Cardiac septum (tissue), 1 donor: ENCODE measurements at regions of chr6 and their contacts with region 1.

Region 1: DNA sequence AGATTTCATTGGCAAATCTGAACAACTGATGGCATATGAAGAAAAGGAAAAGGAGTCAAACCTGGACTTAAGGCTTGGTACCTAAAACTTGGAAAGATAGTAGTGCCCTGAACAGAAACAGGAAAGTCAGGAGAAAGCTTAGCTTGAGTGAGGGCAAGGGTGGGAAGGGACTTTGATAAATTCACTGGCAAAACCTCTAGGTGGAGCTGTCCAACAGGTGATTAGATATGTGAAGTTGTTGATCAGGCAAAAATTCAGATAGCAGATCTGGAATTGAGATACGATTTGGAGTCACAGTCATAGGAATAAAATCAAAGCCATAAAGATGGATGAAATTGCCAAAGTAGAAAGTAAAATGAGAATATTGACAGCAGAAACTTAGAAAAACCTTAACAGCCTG is 16.1 kb upstream of the ZNF292 start:
- DNase-seq: no peak

Region 2: GRCh38 chr6:87197547-87197946 is 58.3 kb after region 1 on chr6:
- intact Hi-C with region 1: no loop called
- DNase-seq: no peak

Region 3: GRCh38 chr6:87237804-87238203 is 98.6 kb after region 1 on chr6:
- intact Hi-C with region 1: loop called (anchors 5 kb)
- DNase-seq: no peak